PC-9 (cell line): ENCODE measurements at regions of chr9 and their contacts with region 1.

Region 1: DNA sequence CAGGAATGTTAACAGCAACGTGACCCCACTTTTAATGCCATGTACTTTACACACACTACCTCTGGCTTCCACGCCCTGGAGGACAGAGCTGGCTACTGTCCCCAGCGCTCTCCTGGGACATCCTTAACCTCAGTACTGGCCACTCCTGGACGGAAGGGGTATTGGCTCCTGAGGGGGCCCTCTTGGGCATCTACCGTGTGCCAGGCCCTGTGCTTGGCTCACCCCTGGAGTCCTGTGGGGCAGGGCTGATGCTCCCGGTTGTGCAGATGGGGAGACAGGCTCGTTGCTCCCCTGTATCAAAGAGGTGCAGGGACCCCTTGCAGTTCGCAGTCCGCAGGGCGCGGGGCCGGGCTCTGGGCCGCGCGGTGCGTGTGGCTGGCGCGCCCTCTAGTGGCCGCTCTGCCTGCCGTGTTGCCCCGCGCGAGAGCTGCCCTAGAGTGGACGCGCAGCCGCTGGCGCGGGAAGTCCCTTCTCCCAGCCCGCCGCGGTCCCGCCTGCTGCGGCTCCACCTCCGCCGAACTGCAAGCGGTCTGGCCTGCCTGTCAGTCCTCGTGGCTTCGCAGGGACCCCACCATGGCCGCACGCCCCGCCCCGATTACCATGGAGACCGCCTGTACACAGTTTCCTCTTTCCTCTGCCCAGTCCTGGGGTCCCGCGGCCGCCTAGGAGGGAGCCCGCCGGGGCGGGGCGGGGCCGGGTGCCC is at the start of gene WDR38:
- DNase-seq: peak; percentile 66 to 82
- H3K4me3 ChIP-seq: peak within 1 kb of the TSS; percentile 63
- H3K27ac ChIP-seq: no peak within 1 kb of the TSS
- H3K4me1 ChIP-seq: 0 out of 2 replicates have a peak, but pooled peaks cover 7% of the 10 kb centered on the region
- H3K27me3 ChIP-seq: no peaks in the 10 kb centered on the region
- CTCF ChIP-seq: peak; percentile 99
- total RNA-seq, gene WDR38: not detected in 2 replicates

Region 2: DNA sequence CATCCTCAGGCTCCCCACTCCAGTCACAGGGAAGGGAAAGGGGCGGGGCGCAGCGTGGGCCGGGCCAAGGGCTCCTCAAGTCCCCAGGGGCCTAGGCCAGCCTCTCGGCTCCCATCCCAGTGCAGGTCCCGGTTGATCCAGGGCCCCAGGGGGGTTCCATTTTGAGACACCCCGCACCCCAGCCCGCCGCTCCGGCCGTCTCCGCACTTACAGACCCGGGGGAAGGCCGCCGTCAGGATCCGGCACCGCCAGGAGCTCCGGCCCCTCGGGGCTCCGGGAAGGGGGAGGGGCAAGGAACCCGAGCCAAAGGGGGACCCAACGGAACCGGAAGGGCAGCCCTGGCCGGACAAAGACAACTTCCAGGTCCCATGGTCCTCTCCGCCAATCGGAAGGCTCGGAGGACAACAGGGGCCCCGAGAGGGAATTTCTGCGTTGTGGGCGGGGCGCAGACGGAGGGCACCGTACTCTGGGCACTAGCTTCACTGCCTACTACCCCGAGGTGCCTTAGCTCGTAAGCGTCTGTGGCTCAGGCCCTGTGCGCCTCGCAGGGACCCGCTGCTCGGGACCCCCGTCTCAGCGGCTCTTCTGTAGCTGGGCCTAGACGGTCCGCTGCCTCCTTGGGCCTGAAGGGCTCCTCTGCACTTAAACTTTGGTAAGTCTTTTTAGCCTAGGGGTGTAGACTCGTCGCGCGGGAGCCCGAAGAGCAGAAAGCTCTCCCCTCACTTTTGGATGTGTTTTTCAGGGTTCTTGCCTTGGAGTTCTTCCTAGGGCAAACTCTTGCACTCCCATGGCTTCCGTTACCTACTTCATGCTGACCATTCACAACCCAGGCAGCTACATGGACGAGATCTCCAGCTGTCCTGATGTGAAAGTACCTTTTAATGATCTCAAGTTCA is 1921.5 kb before region 1 on chr9 and contains the start of gene ZBTB26:
- CTCF ChIA-PET with region 1: no interaction called
- POLR2A ChIA-PET with region 1: no interaction called
- intact Hi-C with region 1: no loop called
- DNase-seq: peak; percentile 90 to 96
- H3K4me3 ChIP-seq: peak within 1 kb of the TSS; percentile 76
- H3K27ac ChIP-seq: peak within 1 kb of the TSS; percentile 42
- H3K4me1 ChIP-seq: peaks cover 18% of the 10 kb centered on the region
- H3K27me3 ChIP-seq: no peaks in the 10 kb centered on the region
- CTCF ChIP-seq: no peak
- total RNA-seq, gene ZBTB26: 10.2 and 12.2 TPM in 2 replicates

Region 3: GRCh38 chr9:124617471-124618141 is 235.4 kb before region 1 on chr9:
- CTCF ChIA-PET with region 1: no interaction called
- POLR2A ChIA-PET with region 1: no interaction called
- intact Hi-C with region 1: loop called (anchors 1 kb)
- DNase-seq: peak; percentile 60 to 80
- H3K4me3 ChIP-seq: no peak overlapping the region
- H3K27ac ChIP-seq: peak overlapping the region; percentile 38
- H3K4me1 ChIP-seq: peaks cover 19% of the 10 kb centered on the region
- H3K27me3 ChIP-seq: no peaks in the 10 kb centered on the region
- CTCF ChIP-seq: peak; percentile 91

Region 4: GRCh38 chr9:124818431-124819281 is 34.3 kb before region 1 on chr9:
- CTCF ChIA-PET with region 1: interaction called, 5 read pairs
- POLR2A ChIA-PET with region 1: interaction called, 4 read pairs
- intact Hi-C with region 1: loop called (anchors 2 kb)
- DNase-seq: peak; percentile 95 to 99
- H3K4me3 ChIP-seq: peak overlapping the region; percentile 16; the same call in 1 of the 2 replicates
- H3K27ac ChIP-seq: peak overlapping the region; percentile 79
- H3K4me1 ChIP-seq: peaks cover 31% of the 10 kb centered on the region
- H3K27me3 ChIP-seq: no peaks in the 10 kb centered on the region
- CTCF ChIP-seq: no peak

Region 5: GRCh38 chr9:124880501-124880900 is 27.5 kb after region 1 on chr9:
- CTCF ChIA-PET with region 1: no interaction called
- POLR2A ChIA-PET with region 1: no interaction called
- intact Hi-C with region 1: no loop called
- DNase-seq: no peak
- H3K4me3 ChIP-seq: no peak overlapping the region
- H3K27ac ChIP-seq: no peak overlapping the region
- H3K4me1 ChIP-seq: no peaks in the 10 kb centered on the region
- H3K27me3 ChIP-seq: no peaks in the 10 kb centered on the region
- CTCF ChIP-seq: no peak

Region 6: GRCh38 chr9:124894741-124895170 is 41.8 kb after region 1 on chr9:
- CTCF ChIA-PET with region 1: interaction called, 4 read pairs
- POLR2A ChIA-PET with region 1: no interaction called
- intact Hi-C with region 1: loop called (anchors 2 kb)
- DNase-seq: peak in 1 of 2 experiments; percentile 21
- H3K4me3 ChIP-seq: no peak overlapping the region
- H3K27ac ChIP-seq: no peak overlapping the region
- H3K4me1 ChIP-seq: no peaks in the 10 kb centered on the region
- H3K27me3 ChIP-seq: no peaks in the 10 kb centered on the region
- CTCF ChIP-seq: peak; percentile 54; the same call in 1 of the 2 replicates